ENCODE measurements at regions of chr10 and their contacts with region 1.

Region 1: GRCh38 chr10:96910488-96911395 is 78.6 kb downstream of the LCOR start:
- H3K4me3 ChIP-seq: no peak overlapping the region
- H3K27ac ChIP-seq: no peak overlapping the region
- H3K4me1 ChIP-seq: peaks cover 6% of the 10 kb centered on the region
- CTCF ChIP-seq: 0 out of 2 replicates have a peak, but pooled peaks have one; percentile 11

Region 2: DNA sequence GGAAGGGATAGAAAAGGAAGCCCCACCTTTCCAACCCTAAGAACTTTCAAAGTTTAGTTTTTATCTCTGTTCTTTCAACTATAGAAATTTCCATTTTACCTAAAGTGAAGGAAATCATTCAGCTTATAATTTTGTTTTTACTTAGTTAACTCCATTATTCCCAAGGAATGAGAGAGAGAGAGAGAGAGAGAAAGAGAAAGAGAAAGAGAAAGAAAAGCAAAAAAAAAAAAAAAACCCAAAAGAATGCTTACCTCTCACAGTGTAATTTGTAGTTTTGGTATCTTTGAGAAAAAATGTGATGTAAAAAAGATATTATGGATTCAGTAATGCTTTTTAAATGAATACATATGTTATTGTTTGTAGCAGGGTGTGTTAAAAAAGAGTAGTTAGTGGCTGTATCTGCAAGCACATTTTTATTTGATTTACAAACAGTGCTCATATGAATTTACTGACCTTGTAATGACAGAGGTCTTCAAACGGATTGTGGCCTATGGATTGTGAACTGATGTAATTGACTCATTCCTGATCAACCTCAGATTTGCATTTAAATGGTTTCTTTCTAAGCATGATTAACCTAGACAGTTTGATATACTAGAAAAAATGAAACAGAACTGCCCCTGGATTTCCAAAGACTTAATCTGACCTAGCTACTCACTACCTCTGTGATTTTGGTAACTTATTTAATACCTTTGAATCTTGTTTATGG is 13.7 kb before region 1 on chr10:
- CTCF ChIA-PET with region 1: interaction called, 10 read pairs
- POLR2A ChIA-PET with region 1: no interaction called
- H3K4me3 ChIP-seq: no peak overlapping the region
- H3K27ac ChIP-seq: no peak overlapping the region
- H3K4me1 ChIP-seq: peaks cover 15% of the 10 kb centered on the region
- CTCF ChIP-seq: no peak

Region 3: GRCh38 chr10:96949039-96949683 is 38.4 kb after region 1 on chr10:
- CTCF ChIA-PET with region 1: interaction called, 10 read pairs
- POLR2A ChIA-PET with region 1: no interaction called
- H3K4me3 ChIP-seq: no peak overlapping the region
- H3K27ac ChIP-seq: no peak overlapping the region
- H3K4me1 ChIP-seq: peaks cover 10% of the 10 kb centered on the region
- CTCF ChIP-seq: no peak

Region 4: DNA sequence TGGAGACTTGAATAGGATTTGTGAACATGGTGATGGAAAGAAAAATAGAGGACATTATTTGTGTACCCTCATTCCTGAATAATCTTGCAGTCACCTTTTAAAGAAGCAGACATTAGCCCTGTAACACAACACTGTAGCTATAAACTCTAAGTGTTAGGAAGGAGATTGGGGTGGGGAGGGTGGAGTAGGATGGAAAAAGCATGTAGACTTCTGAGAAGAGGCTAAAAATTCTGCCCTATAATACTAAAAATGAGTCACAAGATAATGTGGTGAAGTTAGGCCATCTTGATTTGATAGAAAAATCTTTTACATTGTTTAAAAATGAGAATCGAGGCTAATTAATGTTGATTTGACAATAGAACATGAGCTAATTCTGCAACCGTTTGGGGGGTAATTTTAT is 50.1 kb after region 1 on chr10:
- CTCF ChIA-PET with region 1: interaction called, 10 read pairs
- POLR2A ChIA-PET with region 1: no interaction called
- H3K4me3 ChIP-seq: no peak overlapping the region
- H3K27ac ChIP-seq: no peak overlapping the region
- H3K4me1 ChIP-seq: peaks cover 30% of the 10 kb centered on the region
- CTCF ChIP-seq: no peak

Region 5: GRCh38 chr10:97025613-97026242 is 115.0 kb after region 1 on chr10:
- CTCF ChIA-PET with region 1: interaction called, 18 read pairs
- POLR2A ChIA-PET with region 1: no interaction called
- H3K4me3 ChIP-seq: no peak overlapping the region
- H3K27ac ChIP-seq: no peak overlapping the region
- H3K4me1 ChIP-seq: peaks cover 11% of the 10 kb centered on the region; the same call in 1 of the 2 replicates
- CTCF ChIP-seq: peak; percentile 38; the same call in 1 of the 2 replicates

Measured in HEK293 (cell line).